ENCODE measurements at regions of chr14 and their contacts with region 1.

Region 1: DNA sequence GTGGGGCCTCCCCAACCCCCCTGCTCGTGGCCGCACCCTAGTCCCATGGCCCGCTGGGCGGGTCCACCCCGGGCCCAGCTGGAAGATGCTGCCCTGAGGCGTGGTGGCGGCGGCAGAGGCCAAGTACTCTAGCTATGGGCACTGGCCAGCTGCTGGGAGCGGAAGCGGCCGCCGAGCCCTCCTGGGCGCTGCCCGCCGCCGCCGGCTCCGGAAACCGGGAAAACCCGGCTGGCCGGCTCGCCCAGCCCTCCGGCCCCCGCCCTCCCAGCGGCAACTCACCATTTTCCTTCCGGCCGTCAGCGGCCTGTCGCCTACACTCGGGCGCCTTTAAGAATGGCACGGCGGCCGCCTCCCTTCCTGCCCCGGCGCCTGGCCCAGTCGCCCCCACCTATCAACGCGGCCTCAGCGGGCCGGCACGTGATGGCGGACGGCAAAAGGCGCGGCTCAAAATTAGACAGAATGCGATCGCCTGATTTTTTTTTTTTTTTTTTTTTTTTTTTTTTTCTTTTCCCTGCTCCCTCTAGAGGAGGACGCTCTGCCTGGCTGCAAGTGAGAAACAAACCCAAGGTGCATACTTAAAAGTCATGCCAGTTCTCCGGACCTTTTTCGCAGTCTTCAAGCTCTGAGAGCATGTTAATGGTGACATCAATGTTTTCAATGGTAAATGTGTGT is at the start of gene GMFB:
- DNase-seq: peak; percentile 80
- ATAC-seq: peak; percentile 95
- H3K4me3 ChIP-seq: peak within 1 kb of the TSS; percentile 90 to 99 (median 94)
- H3K27ac ChIP-seq: peak within 1 kb of the TSS; percentile 94
- H3K4me1 ChIP-seq: peaks cover 65% of the 10 kb centered on the region
- H3K27me3 ChIP-seq: no peaks in the 10 kb centered on the region; a peak in 1 of 5 replicates
- CTCF ChIP-seq: peak; percentile 35
- EP300 ChIP-seq: 0 out of 4 replicates have a peak, but pooled peaks of 1 of the 2 experiments have one; percentile 40
- POLR2A ChIP-seq: peak; percentile 58; a peak in 3 of 4 replicates
- RAD21 ChIP-seq: 0 out of 2 replicates have a peak, but pooled peaks have one; percentile 65
- total RNA-seq, gene GMFB: 68.2 and 103 TPM in 2 replicates

Region 2: DNA sequence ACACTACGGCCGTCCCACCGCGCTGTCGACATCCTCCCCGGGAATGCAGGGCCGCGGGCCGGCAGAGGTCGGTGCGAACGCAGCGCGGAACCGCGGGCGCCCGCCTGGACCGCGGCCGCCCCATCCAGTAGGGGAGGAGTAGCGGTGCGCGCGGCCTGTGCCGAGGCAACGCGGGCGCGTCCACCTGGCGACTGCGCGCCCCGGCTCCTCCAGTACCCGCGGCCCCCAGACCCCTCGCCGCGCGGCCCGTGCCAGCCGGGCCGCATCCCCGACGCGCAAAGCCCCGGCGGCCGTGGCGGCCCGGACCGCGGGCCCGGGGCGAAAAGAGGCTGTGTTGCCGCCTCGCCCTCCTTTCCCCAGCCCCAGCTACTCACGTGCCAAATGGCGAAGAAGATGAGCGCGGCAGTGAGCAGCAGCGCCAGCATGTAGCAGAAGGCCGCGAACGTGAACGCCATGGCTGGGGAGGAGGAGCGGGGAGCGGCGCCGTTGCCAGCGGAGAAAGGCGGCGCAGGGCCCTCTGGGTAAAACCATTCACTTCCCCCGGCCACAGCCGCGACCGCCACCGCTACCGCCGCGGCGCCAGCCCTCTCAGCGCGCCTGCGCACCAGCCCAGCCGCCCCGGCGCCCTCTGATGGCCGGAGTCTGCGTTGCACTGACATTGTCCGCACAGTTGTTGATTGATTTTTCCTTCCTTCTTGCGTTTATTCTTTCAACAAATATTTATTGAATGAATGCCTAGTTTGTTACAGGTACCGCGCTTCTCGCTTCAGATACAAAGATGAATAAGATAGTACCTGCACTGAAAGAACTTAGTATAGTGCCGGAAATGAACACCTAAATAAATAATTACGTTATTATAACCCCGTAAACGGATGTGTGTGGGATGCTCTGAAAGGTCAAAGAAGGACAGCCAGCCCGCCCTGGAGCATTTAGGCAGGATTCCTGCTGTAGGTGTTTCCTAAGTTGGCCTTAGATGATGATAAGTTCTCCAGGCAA is 47.6 kb before region 1 on chr14 and contains the start of gene CNIH1:
- CTCF ChIA-PET with region 1: no interaction called
- POLR2A ChIA-PET with region 1: interaction called, 19 read pairs
- in situ Hi-C with region 1: no loop called
- intact Hi-C with region 1: loop called (anchors 5 kb)
- DNase-seq: peak; percentile 84
- ATAC-seq: peak; percentile 97
- H3K4me3 ChIP-seq: peak within 1 kb of the TSS; percentile 82 to 87 (median 86)
- H3K27ac ChIP-seq: peak within 1 kb of the TSS; percentile 96
- H3K4me1 ChIP-seq: peaks cover 53% of the 10 kb centered on the region
- H3K27me3 ChIP-seq: no peaks in the 10 kb centered on the region; a peak in 1 of 5 replicates
- CTCF ChIP-seq: peak; percentile 83
- EP300 ChIP-seq: peak in 1 of 2 experiments; percentile 3; a peak in 1 of 4 replicates
- POLR2A ChIP-seq: peak; percentile 82 to 86
- RAD21 ChIP-seq: no peak; the same call in none of the 2 replicates
- total RNA-seq, gene CNIH1: 141 and 166 TPM in 2 replicates

Region 3: DNA sequence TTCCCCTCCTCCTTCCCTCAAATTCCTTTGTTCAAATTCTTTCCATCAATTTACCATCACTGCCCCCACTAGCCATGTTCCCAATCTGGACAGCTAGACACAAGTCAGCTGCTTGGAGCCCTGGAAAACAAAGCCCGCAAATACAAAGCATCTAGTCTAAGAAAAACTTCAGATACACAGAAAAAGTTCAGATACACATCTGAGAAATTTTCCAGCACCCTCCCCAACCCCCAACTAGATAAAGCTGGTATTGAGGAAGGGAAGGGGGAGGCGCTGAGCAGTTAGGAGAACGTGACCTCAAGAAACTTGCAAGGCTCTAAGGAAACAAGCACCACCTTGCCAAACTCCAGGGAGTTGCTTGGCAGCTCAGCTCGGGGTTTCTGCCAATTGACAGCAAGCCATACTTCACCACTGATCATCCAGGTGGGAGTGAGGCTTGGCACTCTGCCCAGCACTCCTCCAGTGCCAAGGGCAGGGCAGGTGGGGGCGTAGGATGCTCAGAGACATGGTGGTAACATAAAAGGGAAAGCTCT is 42.6 kb before region 1 on chr14:
- CTCF ChIA-PET with region 1: no interaction called
- POLR2A ChIA-PET with region 1: interaction called, 19 read pairs
- in situ Hi-C with region 1: no loop called
- intact Hi-C with region 1: loop called (anchors 5 kb)
- DNase-seq: no peak
- ATAC-seq: no peak
- H3K4me3 ChIP-seq: no peak overlapping the region
- H3K27ac ChIP-seq: peak overlapping the region; percentile 83
- H3K4me1 ChIP-seq: peaks cover 47% of the 10 kb centered on the region
- H3K27me3 ChIP-seq: no peaks in the 10 kb centered on the region
- CTCF ChIP-seq: no peak
- EP300 ChIP-seq: no peak
- POLR2A ChIP-seq: no peak
- RAD21 ChIP-seq: no peak

Region 4: DNA sequence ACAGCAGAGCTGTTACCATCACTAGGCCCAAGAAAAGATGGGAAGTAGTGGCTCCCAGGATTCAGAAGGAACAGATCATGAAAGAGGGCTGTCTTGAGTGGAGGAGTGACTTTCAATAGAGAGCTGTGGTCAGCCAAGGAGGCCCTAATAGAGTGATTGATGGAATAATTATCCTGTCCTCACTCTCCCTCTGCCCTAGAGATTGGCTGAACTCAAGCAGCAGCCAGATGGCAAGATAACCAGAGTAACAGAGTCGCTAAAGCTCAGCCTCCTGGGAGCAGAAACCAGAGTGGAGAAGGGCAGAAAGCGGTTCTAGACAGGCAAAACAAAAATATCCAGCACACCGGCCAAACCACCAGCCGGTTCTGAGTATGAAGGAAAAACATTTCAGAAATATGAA is 23.1 kb before region 1 on chr14:
- CTCF ChIA-PET with region 1: no interaction called
- POLR2A ChIA-PET with region 1: no interaction called
- in situ Hi-C with region 1: no loop called
- intact Hi-C with region 1: no loop called
- DNase-seq: no peak
- ATAC-seq: no peak; the same call in 2 of the 3 replicates
- H3K4me3 ChIP-seq: no peak overlapping the region
- H3K27ac ChIP-seq: no peak overlapping the region
- H3K4me1 ChIP-seq: peaks cover 13% of the 10 kb centered on the region; the same call in 1 of the 2 replicates
- H3K27me3 ChIP-seq: no peaks in the 10 kb centered on the region
- CTCF ChIP-seq: no peak
- EP300 ChIP-seq: no peak
- POLR2A ChIP-seq: no peak
- RAD21 ChIP-seq: no peak